PC-9 (cell line): ENCODE measurements at regions of chr12 and their contacts with region 1.

Region 1: GRCh38 chr12:9750276-9751203 is 10.2 kb downstream of the CD69 start:
- DNase-seq: peak; percentile 45 to 63
- H3K4me3 ChIP-seq: peak overlapping the region; percentile 46; the same call in 1 of the 2 replicates
- H3K27ac ChIP-seq: no peak overlapping the region
- H3K4me1 ChIP-seq: peaks cover 9% of the 10 kb centered on the region; the same call in 1 of the 2 replicates
- H3K27me3 ChIP-seq: no peaks in the 10 kb centered on the region
- CTCF ChIP-seq: peak; percentile 93

Region 2: GRCh38 chr12:9163392-9163791 is 587.1 kb before region 1 on chr12:
- CTCF ChIA-PET with region 1: no interaction called
- POLR2A ChIA-PET with region 1: no interaction called
- intact Hi-C with region 1: no loop called
- DNase-seq: no peak
- H3K4me3 ChIP-seq: no peak overlapping the region
- H3K27ac ChIP-seq: no peak overlapping the region
- H3K4me1 ChIP-seq: no peaks in the 10 kb centered on the region
- H3K27me3 ChIP-seq: peaks cover 43% of the 10 kb centered on the region
- CTCF ChIP-seq: no peak

Region 3: GRCh38 chr12:9253464-9253863 is 497.1 kb before region 1 on chr12:
- CTCF ChIA-PET with region 1: no interaction called
- POLR2A ChIA-PET with region 1: no interaction called
- intact Hi-C with region 1: no loop called
- DNase-seq: no peak
- H3K4me3 ChIP-seq: no peak overlapping the region
- H3K27ac ChIP-seq: no peak overlapping the region
- H3K4me1 ChIP-seq: no peaks in the 10 kb centered on the region
- H3K27me3 ChIP-seq: peaks cover 26% of the 10 kb centered on the region
- CTCF ChIP-seq: no peak

Region 4: GRCh38 chr12:9634177-9634803 is 116.2 kb before region 1 on chr12:
- CTCF ChIA-PET with region 1: no interaction called
- POLR2A ChIA-PET with region 1: no interaction called
- intact Hi-C with region 1: loop called (anchors 1 kb)
- DNase-seq: peak; percentile 43 to 56
- H3K4me3 ChIP-seq: no peak overlapping the region
- H3K27ac ChIP-seq: no peak overlapping the region
- H3K4me1 ChIP-seq: peaks cover 20% of the 10 kb centered on the region
- H3K27me3 ChIP-seq: no peaks in the 10 kb centered on the region
- CTCF ChIP-seq: peak; percentile 90

Region 5: GRCh38 chr12:9813821-9814809 is 63.6 kb after region 1 on chr12:
- CTCF ChIA-PET with region 1: interaction called, 7 read pairs
- POLR2A ChIA-PET with region 1: no interaction called
- intact Hi-C with region 1: loop called (anchors 1 kb)
- DNase-seq: peak; percentile 35 to 83
- H3K4me3 ChIP-seq: 0 out of 2 replicates have a peak overlapping the region, but pooled peaks have one; percentile 33
- H3K27ac ChIP-seq: no peak overlapping the region
- H3K4me1 ChIP-seq: no peaks in the 10 kb centered on the region
- H3K27me3 ChIP-seq: no peaks in the 10 kb centered on the region
- CTCF ChIP-seq: peak; percentile 83

Region 6: DNA sequence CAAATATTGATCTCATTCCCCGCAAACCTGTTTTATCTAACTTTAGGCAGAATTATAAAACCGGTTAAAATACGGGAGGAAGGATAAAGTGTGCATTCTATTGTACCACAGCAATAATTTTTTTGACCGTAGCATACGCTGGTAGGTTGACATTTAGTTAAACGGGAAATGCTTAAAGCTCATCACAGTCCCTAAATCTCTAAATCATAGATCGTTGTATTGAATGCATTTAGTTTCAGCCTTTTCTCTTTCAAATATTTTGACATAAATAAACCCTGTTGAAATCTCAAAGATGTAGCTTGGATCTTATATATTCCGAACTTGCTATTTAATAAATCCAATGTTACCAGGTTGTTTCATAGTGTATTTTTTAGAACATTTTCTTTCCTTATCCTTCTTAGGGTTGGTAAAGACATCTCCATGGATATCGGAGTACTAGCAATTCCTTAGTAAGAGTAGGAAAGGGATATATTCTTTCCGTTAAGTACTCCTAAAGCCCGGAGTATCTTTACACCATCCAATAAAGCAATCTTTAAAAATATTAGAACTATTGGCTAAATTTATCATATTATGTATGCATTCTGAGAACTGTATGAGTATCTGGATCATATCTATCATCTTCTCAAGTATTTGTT is 117.9 kb after region 1 on chr12:
- CTCF ChIA-PET with region 1: no interaction called
- POLR2A ChIA-PET with region 1: no interaction called
- intact Hi-C with region 1: no loop called
- DNase-seq: no peak
- H3K4me3 ChIP-seq: no peak overlapping the region; the same call in 1 of the 2 replicates
- H3K27ac ChIP-seq: no peak overlapping the region
- H3K4me1 ChIP-seq: peaks cover 17% of the 10 kb centered on the region
- H3K27me3 ChIP-seq: no peaks in the 10 kb centered on the region
- CTCF ChIP-seq: no peak

Region 7: GRCh38 chr12:9933958-9934357 is 183.4 kb after region 1 on chr12:
- CTCF ChIA-PET with region 1: no interaction called
- POLR2A ChIA-PET with region 1: no interaction called
- intact Hi-C with region 1: no loop called
- DNase-seq: no peak
- H3K4me3 ChIP-seq: no peak overlapping the region
- H3K27ac ChIP-seq: no peak overlapping the region
- H3K4me1 ChIP-seq: no peaks in the 10 kb centered on the region
- H3K27me3 ChIP-seq: no peaks in the 10 kb centered on the region
- CTCF ChIP-seq: no peak

Region 8: DNA sequence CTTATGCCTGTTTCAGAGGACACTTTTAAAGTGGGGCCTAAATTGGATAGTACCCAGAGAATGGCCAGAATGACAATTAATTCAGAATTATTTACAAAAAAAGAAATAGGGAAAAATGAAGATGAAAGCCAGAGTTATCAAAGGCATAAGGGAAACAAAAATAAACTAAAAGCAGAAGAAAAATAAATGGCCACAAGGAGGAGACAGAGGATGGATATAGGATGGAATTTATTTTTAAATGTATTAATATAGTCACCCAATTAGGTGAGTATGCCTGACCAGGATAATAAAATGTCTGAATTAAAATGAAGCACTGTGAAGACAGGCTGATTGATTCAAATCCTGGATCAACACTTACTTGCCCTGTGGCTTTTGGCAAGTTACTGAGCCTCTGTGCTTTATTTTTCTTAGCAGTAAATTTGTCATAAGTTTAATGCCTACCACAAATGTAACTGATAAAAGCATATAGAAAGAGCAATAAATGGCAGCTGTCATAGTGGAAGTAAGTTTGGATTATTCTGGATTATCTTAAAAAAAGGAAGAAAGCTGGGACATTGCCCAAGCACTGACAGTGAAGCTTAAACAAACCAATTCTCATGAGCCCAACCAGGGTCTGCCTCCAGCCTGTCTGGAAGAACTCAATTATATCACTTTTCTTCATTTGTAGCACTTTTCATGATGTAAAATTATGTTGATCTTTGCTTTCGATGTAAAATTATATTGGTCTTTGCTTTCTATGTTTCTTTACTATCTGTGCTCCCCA is 283.4 kb after region 1 on chr12:
- CTCF ChIA-PET with region 1: interaction called, 3 read pairs
- POLR2A ChIA-PET with region 1: no interaction called
- intact Hi-C with region 1: loop called (anchors 5 kb)
- DNase-seq: no peak
- H3K4me3 ChIP-seq: no peak overlapping the region
- H3K27ac ChIP-seq: no peak overlapping the region
- H3K4me1 ChIP-seq: no peaks in the 10 kb centered on the region
- H3K27me3 ChIP-seq: no peaks in the 10 kb centered on the region
- CTCF ChIP-seq: peak; percentile 80

Region 9: DNA sequence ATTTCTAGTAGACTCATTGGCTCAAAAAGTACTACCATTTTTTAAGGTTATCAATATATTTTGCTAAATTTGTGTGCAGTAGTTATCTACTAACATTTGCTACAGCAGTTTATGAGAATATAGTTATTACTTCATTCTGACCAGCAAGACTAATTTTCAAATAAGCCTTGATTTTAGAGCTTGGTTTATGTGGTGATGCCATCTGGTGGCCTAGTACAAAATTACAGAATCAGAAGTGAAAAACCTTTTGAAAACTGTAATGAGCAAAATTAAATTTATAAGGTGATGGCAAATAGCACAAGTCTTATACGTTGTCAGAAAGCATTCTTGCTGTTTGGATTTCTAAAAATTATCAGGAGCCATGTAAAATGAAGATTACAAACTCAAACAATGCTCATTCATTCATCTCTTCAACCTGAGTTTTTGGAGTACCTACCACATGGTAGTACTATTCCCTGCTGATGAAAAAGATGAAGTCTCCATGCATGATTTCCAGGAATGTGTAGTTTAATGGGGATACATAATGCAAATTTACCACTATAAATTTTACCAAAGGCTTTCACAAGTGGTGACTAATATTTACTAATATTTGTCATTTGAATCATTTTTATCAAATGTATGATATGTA is 811.9 kb after region 1 on chr12:
- CTCF ChIA-PET with region 1: no interaction called
- POLR2A ChIA-PET with region 1: no interaction called
- intact Hi-C with region 1: loop called (anchors 2 kb)
- DNase-seq: peak in 1 of 2 experiments; percentile 28
- H3K4me3 ChIP-seq: no peak overlapping the region
- H3K27ac ChIP-seq: no peak overlapping the region
- H3K4me1 ChIP-seq: no peaks in the 10 kb centered on the region
- H3K27me3 ChIP-seq: no peaks in the 10 kb centered on the region
- CTCF ChIP-seq: peak; percentile 87